SK-N-SH (cell line): ENCODE measurements at regions of chr5 and their contacts with region 1.

Region 1: DNA sequence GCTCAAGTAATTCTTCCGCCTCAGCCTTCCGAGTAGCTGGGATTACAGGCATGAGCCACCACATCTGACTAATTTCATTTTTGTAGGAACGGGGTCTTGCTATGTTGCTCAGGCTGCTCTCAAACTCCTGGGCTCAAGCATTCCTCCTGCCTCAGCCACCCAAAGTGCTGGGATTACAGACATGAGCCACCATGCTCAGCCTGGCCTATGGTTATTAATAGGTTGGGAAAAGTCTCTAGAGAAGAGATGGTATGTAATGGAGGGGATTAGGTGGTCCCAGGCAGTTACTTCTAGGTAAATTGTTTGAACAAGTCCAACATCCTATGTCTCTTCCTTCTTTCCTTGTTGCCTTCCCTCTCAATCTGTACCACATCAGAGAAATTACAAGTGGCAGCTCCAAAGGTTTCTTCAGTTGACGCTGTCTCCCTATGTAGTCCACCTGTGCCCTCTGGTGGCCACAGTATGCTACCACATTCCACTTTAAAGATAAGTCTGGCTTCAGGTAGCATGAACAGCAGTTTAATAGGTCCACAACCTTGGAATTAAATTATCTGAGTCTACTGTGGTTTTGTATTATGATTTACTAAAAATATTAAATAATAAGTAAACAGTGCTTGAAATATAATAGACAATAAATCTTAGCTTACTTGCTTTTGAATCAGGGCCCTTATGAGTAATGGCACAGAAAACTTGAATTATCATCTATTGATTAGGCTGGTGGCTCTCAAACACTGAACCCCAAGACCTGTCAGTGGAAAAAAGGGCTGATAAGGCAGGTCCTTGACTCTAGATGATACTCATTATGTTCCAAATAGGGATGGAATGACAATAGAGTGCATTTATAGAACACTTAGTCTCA is 9.7 kb downstream of the TIGD6 start:
- DNase-seq: peak; percentile 67
- H3K4me3 ChIP-seq: peak overlapping the region in 1 of 2 experiments; percentile 28; a peak in 1 of 4 replicates
- H3K27ac ChIP-seq: no peak overlapping the region
- H3K4me1 ChIP-seq: peaks cover 9 to 10% of the 10 kb centered on the region in 2 experiments; a peak in 1 of 4 replicates
- H3K27me3 ChIP-seq: no peaks in the 10 kb centered on the region
- CTCF ChIP-seq: peak; percentile 96
- EP300 ChIP-seq: peak in 1 of 2 experiments; percentile 28; a peak in 1 of 4 replicates
- RAD21 ChIP-seq: peak; percentile 98

Region 2: DNA sequence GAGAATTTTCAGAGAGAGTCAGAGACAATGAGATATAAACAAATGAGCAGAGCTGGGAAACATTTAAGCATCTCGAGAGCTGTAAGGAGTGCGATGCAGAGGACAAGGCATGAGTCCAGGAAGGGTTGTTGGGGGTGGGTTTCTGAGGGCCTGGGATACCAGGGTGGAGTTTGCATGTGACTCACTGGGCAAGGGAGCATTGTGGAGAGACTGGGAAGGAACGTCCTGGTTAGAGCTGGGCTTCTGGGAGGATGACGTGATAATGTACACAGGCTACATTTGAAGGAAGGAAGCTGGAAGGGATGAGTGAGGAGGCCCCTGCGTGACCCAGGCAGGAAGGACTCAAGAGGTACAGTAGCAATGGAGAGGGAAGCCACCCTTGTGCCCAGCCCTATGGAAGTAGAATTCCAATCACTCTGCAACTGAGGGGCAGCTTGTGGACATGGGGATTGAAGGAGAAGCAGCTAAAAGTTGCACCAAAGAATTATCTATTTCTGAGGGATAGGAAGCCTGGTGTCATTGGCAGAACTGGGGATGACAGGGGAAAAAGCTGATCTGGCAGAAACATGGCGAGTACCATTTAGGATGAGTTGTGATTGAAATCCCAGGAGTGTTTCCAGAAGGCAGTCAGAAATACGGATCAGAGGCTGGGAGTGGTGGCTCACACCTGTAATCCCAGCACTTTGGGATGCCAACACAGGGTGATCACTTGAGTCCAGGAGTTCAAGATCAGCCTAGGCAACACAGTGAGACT is 778.4 kb before region 1 on chr5:
- CTCF ChIA-PET with region 1: no interaction called
- POLR2A ChIA-PET with region 1: no interaction called
- DNase-seq: no peak
- H3K4me3 ChIP-seq: no peak overlapping the region
- H3K27ac ChIP-seq: peak overlapping the region in 1 of 2 experiments; percentile 94; a peak in 2 of 4 replicates
- H3K4me1 ChIP-seq: peaks cover 2 to 17% of the 10 kb centered on the region in 2 experiments; a peak in 3 of 4 replicates
- H3K27me3 ChIP-seq: no peaks in the 10 kb centered on the region
- CTCF ChIP-seq: no peak
- EP300 ChIP-seq: no peak
- RAD21 ChIP-seq: no peak

Region 3: DNA sequence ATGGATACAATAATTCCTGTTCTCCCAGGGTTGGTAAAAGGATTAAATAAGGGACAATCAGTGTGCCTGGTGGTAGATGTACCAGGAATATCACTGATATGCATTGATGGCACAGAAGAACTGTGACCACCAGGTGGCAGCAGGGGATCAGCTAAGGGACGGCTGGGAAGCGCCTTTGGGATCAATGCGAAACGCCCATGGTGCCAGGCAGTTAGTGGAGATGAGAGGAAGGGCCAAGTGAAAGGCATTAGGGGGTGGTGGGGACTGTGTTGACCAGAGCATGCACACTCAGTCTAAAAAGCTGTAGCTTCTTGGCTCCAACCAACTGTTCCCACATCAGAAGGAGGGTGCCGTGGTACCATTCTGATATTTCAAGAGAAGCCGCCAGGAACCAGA is 353.9 kb before region 1 on chr5:
- CTCF ChIA-PET with region 1: interaction called, 37 read pairs
- POLR2A ChIA-PET with region 1: no interaction called
- DNase-seq: peak; percentile 81
- H3K4me3 ChIP-seq: peak overlapping the region in 1 of 2 experiments; percentile 43; a peak in 1 of 4 replicates
- H3K27ac ChIP-seq: no peak overlapping the region
- H3K4me1 ChIP-seq: peaks cover 0 to 12% of the 10 kb centered on the region in 2 experiments; a peak in 1 of 4 replicates
- H3K27me3 ChIP-seq: no peaks in the 10 kb centered on the region
- CTCF ChIP-seq: peak; percentile 84
- EP300 ChIP-seq: no peak
- RAD21 ChIP-seq: peak; percentile 99

Region 4: GRCh38 chr5:149872351-149873040 is 118.3 kb before region 1 on chr5:
- CTCF ChIA-PET with region 1: interaction called, 11 read pairs
- POLR2A ChIA-PET with region 1: no interaction called
- DNase-seq: no peak
- H3K4me3 ChIP-seq: no peak overlapping the region
- H3K27ac ChIP-seq: no peak overlapping the region
- H3K4me1 ChIP-seq: no peaks in the 10 kb centered on the region
- H3K27me3 ChIP-seq: no peaks in the 10 kb centered on the region; the same call in 1 of the 2 replicates
- CTCF ChIP-seq: no peak
- EP300 ChIP-seq: no peak
- RAD21 ChIP-seq: no peak

Region 5: GRCh38 chr5:149969181-149969930 is 21.4 kb before region 1 on chr5:
- CTCF ChIA-PET with region 1: interaction called, 71 read pairs
- POLR2A ChIA-PET with region 1: no interaction called
- DNase-seq: no peak
- H3K4me3 ChIP-seq: no peak overlapping the region
- H3K27ac ChIP-seq: no peak overlapping the region
- H3K4me1 ChIP-seq: no peaks in the 10 kb centered on the region
- H3K27me3 ChIP-seq: no peaks in the 10 kb centered on the region
- CTCF ChIP-seq: no peak
- EP300 ChIP-seq: no peak
- RAD21 ChIP-seq: no peak

Region 6: GRCh38 chr5:150006318-150006717 is 15.6 kb after region 1 on chr5:
- CTCF ChIA-PET with region 1: interaction called, 29 read pairs
- POLR2A ChIA-PET with region 1: no interaction called
- DNase-seq: no peak
- H3K4me3 ChIP-seq: no peak overlapping the region
- H3K27ac ChIP-seq: no peak overlapping the region
- H3K4me1 ChIP-seq: peaks cover 7 to 13% of the 10 kb centered on the region in 2 experiments; a peak in 3 of 4 replicates
- H3K27me3 ChIP-seq: no peaks in the 10 kb centered on the region
- CTCF ChIP-seq: no peak
- EP300 ChIP-seq: no peak
- RAD21 ChIP-seq: no peak

Region 7: GRCh38 chr5:150409638-150410523 is 419.1 kb after region 1 on chr5:
- CTCF ChIA-PET with region 1: no interaction called
- POLR2A ChIA-PET with region 1: no interaction called
- DNase-seq: peak; percentile 91
- H3K4me3 ChIP-seq: peak overlapping the region in 1 of 2 experiments; percentile 20; a peak in 1 of 4 replicates
- H3K27ac ChIP-seq: peak overlapping the region in 1 of 2 experiments; percentile 84; a peak in 2 of 4 replicates
- H3K4me1 ChIP-seq: peaks cover 4 to 8% of the 10 kb centered on the region in 2 experiments; a peak in 3 of 4 replicates
- H3K27me3 ChIP-seq: no peaks in the 10 kb centered on the region
- CTCF ChIP-seq: no peak
- EP300 ChIP-seq: no peak
- RAD21 ChIP-seq: no peak